BJ (cell line): ENCODE measurements at regions of chr3 and their contacts with region 1.

Region 1: DNA sequence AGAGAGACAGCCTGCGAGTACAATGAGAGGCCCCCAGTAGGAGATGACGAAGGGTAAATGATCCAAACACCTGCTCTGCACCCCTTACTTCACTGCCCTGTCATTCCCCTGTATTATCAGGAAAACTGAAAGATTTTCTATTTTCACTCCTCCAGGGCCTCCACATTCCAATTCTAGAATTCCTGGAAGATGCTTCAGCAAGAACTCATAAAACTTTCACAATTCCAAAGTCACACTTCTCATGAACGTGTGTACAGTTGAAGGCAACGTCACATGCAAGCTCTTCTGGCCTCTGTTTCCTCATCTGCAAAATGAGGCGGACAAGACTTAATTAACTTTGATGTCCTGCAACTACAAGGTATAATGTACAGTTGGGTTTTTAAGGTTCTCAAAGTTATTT is 62.8 kb upstream of the SPATA12 start:
- DNase-seq: no peak
- H3K4me3 ChIP-seq: no peak overlapping the region
- H3K27me3 ChIP-seq: no peaks in the 10 kb centered on the region
- CTCF ChIP-seq: no peak

Region 2: DNA sequence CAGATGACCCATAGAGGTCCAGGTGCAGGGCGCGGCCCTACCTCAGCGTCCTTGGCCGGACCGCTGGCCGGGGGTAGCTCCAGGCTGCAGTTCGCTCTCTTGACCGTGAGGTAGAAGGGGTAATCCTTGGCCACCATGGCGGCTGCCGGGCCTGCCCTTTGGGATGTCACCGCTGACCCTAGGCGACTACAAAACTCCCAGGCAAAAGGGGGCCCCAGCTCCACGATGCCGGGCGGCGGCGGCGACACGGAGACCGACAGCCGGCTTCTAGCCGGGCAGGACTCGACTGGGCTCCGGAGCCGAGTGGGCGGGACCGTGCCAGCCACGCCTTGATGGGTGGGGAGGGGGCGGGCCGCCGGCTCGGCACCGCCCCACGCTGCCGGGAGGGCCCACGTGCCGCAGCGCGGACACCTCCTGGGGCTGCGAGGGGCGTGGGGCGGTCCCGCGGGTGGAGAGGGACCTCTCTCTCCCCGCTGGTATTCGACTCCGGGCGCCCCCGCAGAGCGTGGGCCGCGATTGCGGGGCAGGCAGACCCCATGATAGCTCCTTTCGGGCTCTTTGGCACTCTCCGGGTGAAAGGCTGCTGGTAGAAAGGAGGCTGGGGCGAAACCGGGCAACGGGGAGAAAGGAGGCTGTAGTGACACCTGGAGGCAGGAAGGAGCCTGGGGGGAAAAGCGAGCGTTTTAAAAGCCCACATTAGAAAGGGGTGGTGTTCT is 195.9 kb before region 1 on chr3 and contains the start of gene ARHGEF3:
- CTCF ChIA-PET with region 1: interaction called, 26 read pairs
- POLR2A ChIA-PET with region 1: no interaction called
- DNase-seq: no peak
- H3K4me3 ChIP-seq: peak within 1 kb of the TSS; percentile 50
- H3K27me3 ChIP-seq: 0 out of 2 replicates have a peak, but pooled peaks cover 1% of the 10 kb centered on the region
- CTCF ChIP-seq: peak; percentile 49
- polyA plus RNA-seq, gene ARHGEF3: 2.0 and 2.1 TPM in 2 replicates

Region 3: DNA sequence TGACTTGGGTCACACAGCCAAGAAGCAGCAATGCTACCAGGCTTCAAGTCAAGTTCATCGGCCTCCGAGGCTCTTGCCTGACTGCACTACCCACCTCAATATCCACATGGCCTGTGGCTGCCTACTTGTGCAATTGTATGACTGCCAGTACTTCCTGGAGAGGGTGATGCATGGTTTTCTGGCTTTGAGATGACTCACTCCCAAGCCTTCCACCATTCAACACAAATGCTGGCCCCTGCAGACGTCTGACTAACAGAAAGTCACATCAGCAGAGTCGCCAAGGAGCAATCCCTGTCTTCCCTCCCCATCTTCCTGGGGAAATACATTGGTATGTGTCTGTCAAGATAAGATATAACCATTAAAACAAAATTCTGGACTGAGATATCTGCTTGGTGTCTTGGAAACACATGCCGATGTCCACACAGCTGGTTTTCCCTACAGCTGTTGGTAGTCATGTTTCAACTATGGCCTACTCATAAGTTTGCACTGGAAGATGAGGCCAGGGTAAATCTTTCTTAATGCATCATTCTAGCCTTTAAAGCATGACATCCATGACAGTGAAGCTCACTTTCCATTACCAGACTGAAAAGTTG is 16.8 kb before region 1 on chr3:
- CTCF ChIA-PET with region 1: interaction called, 38 read pairs
- POLR2A ChIA-PET with region 1: no interaction called
- DNase-seq: peak; percentile 90
- H3K4me3 ChIP-seq: no peak overlapping the region
- H3K27me3 ChIP-seq: no peaks in the 10 kb centered on the region
- CTCF ChIP-seq: no peak

Region 4: DNA sequence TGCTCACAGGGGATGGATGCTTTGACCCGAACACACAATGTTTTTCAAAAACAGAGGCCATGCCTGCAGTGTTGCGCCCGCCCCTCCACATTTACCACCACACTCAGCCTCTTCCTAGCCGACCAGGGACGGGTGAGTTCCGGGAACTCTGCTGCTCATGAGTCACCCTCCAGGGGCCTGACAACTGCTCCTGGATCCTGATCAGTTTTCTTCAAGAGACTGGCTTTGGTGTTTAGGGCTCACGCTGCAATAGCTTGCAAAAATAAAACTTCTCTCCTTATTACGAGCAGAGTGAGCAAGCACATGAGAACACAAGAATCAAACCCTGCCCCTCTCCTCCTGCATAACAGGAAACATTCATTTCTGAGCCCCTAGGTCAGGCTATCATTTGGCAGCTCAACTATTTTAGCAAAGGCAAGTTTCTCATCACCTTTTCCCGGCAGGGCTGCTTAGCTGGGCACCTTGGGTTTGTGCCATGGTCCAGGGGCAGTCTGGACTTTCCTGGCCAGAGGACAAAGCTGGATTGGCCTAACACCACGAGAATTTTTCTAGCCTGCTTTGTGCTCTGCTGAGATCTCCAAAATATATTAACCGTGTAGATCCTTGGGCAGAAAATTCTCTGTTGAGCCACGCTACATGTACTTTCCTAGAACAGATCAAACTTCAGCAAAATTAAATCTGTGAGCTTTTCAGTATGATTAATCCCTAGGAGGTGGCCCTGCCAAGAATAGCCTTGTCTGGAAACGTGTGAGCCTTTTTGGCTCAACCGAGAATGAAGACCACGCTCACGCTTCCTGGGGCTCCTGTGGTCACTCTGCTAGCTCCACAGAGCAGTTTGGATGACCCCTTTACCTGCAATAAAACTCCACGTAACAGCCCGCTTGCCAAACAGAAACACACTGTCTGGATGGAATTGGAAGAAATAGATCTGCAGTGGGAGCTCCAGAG is 10.1 kb after region 1 on chr3:
- CTCF ChIA-PET with region 1: interaction called, 53 read pairs
- POLR2A ChIA-PET with region 1: no interaction called
- DNase-seq: no peak
- H3K4me3 ChIP-seq: no peak overlapping the region
- H3K27me3 ChIP-seq: no peaks in the 10 kb centered on the region; the same call in 1 of the 2 replicates
- CTCF ChIP-seq: no peak